Ascending aorta (tissue), 2 donors: ENCODE measurements at regions of chr1 and their contacts with region 1.

Region 1: GRCh38 chr1:198726455-198726854 is 87.6 kb downstream of the PTPRC start:
- DNase-seq: no peak
- H3K4me3 ChIP-seq: no peak overlapping the region
- H3K27ac ChIP-seq: no peak overlapping the region
- H3K4me1 ChIP-seq: no peaks in the 10 kb centered on the region
- H3K27me3 ChIP-seq: no peaks in the 10 kb centered on the region
- CTCF ChIP-seq: no peak

Region 2: DNA sequence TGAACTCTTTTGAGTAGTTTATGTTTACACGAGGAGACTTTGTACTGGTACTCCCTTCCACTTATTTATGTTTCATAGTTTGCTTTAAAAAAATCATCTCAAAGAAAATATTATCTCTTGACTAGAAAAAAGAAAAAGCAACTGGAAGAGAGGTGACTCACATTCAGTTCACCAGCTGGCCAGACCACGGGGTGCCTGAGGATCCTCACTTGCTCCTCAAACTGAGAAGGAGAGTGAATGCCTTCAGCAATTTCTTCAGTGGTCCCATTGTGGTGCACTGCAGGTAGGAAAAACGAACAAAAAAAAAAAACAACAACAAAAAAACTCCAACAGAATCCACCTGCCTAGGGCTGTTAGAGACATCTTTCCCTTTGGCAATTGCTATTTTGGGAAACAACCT is 15.3 kb after region 1 on chr1:
- intact Hi-C with region 1: loop called (anchors 1 kb)
- DNase-seq: no peak
- H3K4me3 ChIP-seq: no peak overlapping the region
- H3K27ac ChIP-seq: no peak overlapping the region
- H3K4me1 ChIP-seq: no peaks in the 10 kb centered on the region
- H3K27me3 ChIP-seq: no peaks in the 10 kb centered on the region
- CTCF ChIP-seq: no peak